CD4-positive, alpha-beta T cell (primary cell): ENCODE measurements at regions of chr20 and their contacts with region 1.

Region 1: GRCh38 chr20:40990542-40991120 is 38.0 kb upstream of the TOP1 start:
- DNase-seq: peak; percentile 31 to 81 (median 54)
- ATAC-seq: peak; percentile 80
- H3K4me3 ChIP-seq: no peak overlapping the region
- H3K4me3 Mint-ChIP-seq: no peak overlapping the region
- H3K27ac ChIP-seq: no peak overlapping the region
- H3K27ac Mint-ChIP-seq: peak overlapping the region; percentile 32
- H3K4me1 ChIP-seq: peaks cover 28% of the 10 kb centered on the region
- H3K4me1 Mint-ChIP-seq: peaks cover 31% of the 10 kb centered on the region
- H3K27me3 ChIP-seq: no peaks in the 10 kb centered on the region
- H3K27me3 Mint-ChIP-seq: no peaks in the 10 kb centered on the region
- CTCF ChIP-seq: peak; percentile 83

Region 2: DNA sequence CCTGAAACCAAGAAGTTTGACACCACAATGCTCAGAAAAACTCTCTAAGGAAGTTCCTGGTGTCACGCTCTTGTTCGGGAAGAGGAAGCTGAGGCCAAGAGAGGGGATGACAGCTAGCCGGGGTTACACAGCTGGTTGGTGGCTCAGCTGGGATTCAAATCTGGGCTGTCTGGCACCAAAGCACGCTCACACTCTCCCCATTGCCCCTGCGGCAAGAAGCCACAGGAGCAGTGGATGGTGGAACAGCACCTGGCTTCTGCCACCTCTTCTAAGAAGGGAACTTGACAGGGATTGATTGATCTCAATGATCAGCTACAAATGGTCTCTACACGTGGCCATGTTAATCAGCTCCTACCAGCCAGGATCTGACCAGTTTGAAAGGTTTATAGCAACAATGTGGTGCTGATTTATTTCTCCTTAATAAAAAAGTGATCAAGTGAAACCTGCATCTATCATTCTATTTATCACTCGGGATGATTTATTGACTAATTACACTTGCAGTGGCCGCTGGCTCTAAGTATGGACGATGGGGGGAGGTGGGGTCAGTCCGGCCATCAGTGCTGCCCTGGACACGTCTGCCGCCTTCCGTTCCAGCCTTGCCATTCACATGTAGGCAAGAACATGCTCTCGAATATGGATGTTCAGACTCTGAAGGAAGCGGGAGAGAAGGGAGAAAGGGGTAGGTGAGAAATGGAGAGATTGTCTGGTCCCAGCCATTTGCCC is 33.9 kb before region 1 on chr20:
- CTCF ChIA-PET with region 1: no interaction called
- POLR2A ChIA-PET with region 1: no interaction called
- intact Hi-C with region 1: no loop called
- DNase-seq: peak in 2 of 14 experiments; percentile 35 to 45
- ATAC-seq: no peak
- H3K4me3 ChIP-seq: no peak overlapping the region
- H3K4me3 Mint-ChIP-seq: no peak overlapping the region
- H3K27ac ChIP-seq: no peak overlapping the region
- H3K27ac Mint-ChIP-seq: no peak overlapping the region
- H3K4me1 ChIP-seq: peaks cover 7% of the 10 kb centered on the region
- H3K4me1 Mint-ChIP-seq: peaks cover 3% of the 10 kb centered on the region
- H3K27me3 ChIP-seq: no peaks in the 10 kb centered on the region
- H3K27me3 Mint-ChIP-seq: peaks cover 4% of the 10 kb centered on the region
- CTCF ChIP-seq: no peak

Region 3: DNA sequence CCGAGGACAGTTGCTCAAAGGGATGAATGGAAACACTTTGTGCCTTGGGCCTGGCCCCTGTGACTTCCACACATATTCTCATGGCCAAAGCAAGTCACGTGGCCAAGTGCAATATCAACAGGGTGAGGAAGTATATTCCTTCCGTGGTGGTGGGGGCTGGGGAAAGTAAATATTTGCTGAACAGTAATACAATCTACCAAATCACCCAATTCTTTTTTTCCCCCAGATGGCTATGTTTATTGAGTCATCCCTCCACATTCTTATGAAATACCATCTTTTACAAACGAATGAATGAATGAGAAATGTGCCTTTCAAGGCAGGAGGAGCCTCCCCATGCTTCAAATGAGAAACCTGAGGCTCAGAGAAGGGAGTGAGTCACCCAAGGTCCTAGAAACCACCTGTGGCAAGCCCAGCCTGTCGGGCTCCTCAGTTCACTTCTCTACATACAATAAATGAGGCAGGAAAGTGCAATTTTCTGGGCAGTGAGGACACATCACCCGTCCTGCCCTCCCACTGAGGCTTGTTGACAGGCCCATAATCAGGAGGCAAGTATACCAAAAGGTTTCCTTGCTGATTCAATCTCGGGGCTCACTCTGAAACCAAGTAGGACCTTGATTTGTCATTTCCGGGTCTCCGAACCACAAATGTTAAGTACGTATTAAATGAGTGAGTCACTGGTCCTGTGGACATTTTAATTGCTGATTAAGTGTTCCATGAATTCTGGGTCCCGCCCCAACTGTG is 12.7 kb after region 1 on chr20:
- CTCF ChIA-PET with region 1: interaction called, 10 read pairs
- POLR2A ChIA-PET with region 1: no interaction called
- intact Hi-C with region 1: no loop called
- DNase-seq: peak; percentile 19 to 89 (median 45)
- ATAC-seq: peak; percentile 88
- H3K4me3 ChIP-seq: peak overlapping the region; percentile 45
- H3K4me3 Mint-ChIP-seq: peak overlapping the region; percentile 79
- H3K27ac ChIP-seq: peak overlapping the region; percentile 25 to 88
- H3K27ac Mint-ChIP-seq: peak overlapping the region; percentile 95
- H3K4me1 ChIP-seq: peaks cover 33% of the 10 kb centered on the region
- H3K4me1 Mint-ChIP-seq: peaks cover 19% of the 10 kb centered on the region
- H3K27me3 ChIP-seq: no peaks in the 10 kb centered on the region
- H3K27me3 Mint-ChIP-seq: no peaks in the 10 kb centered on the region
- CTCF ChIP-seq: no peak

Region 4: DNA sequence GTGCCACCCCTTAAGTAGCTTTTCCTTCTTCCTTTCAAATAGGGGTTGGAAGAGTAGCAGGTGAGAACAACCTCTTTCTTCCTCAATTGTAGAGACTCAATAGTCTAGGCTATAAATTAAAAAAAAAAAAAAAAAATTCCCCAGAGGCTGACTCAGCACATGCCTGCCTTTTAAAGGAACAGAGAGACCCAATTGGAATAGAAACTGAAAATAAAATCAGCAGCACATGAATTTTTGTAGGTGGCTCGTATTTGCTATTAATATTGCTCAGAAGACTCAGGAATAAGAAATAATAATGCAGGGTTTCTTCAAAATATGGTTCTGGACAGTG is 57.3 kb after region 1 on chr20:
- CTCF ChIA-PET with region 1: interaction called, 5 read pairs
- POLR2A ChIA-PET with region 1: interaction called, 6 read pairs
- intact Hi-C with region 1: loop called in 1 of 2 experiments (anchors 2 kb)
- DNase-seq: peak in 3 of 14 experiments; percentile 61 to 70 (median 63)
- ATAC-seq: peak; percentile 71
- H3K4me3 ChIP-seq: peak overlapping the region; percentile 37
- H3K4me3 Mint-ChIP-seq: peak overlapping the region; percentile 80
- H3K27ac ChIP-seq: peak overlapping the region; percentile 54 to 56
- H3K27ac Mint-ChIP-seq: peak overlapping the region; percentile 69
- H3K4me1 ChIP-seq: peaks cover 54% of the 10 kb centered on the region
- H3K4me1 Mint-ChIP-seq: peaks cover 94% of the 10 kb centered on the region
- H3K27me3 ChIP-seq: no peaks in the 10 kb centered on the region
- H3K27me3 Mint-ChIP-seq: no peaks in the 10 kb centered on the region
- CTCF ChIP-seq: no peak

Region 5: DNA sequence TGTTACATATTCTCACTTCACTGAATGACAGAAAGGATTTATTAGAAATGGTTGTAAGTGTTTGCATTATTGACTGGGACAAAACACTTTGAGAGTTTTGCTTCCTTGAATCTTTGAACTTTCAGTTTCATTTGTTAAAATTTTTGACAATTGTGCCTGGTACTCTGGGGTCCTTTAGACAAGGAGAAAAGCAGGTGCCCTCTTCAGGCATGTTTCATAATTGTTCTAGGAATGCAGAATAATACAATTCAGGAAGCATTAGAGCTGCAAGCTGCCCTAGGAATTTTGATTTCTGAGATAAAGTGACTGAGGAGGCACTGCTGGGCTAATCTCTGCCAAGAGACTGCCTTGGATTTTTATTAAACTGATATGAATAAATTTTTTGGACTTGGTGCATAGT is 87.7 kb after region 1 on chr20:
- CTCF ChIA-PET with region 1: interaction called, 7 read pairs
- POLR2A ChIA-PET with region 1: interaction called, 5 read pairs
- intact Hi-C with region 1: loop called in 1 of 2 experiments (anchors 5 kb)
- DNase-seq: peak in 3 of 14 experiments; percentile 21 to 57 (median 30)
- ATAC-seq: peak; percentile 22
- H3K4me3 ChIP-seq: no peak overlapping the region
- H3K4me3 Mint-ChIP-seq: no peak overlapping the region
- H3K27ac ChIP-seq: no peak overlapping the region
- H3K27ac Mint-ChIP-seq: peak overlapping the region; percentile 42
- H3K4me1 ChIP-seq: peaks cover 7% of the 10 kb centered on the region
- H3K4me1 Mint-ChIP-seq: peaks cover 71% of the 10 kb centered on the region
- H3K27me3 ChIP-seq: no peaks in the 10 kb centered on the region
- H3K27me3 Mint-ChIP-seq: no peaks in the 10 kb centered on the region
- CTCF ChIP-seq: peak; percentile 18

Region 6: GRCh38 chr20:41095110-41095969 is 104.7 kb after region 1 on chr20:
- CTCF ChIA-PET with region 1: interaction called, 19 read pairs
- POLR2A ChIA-PET with region 1: interaction called, 20 read pairs
- intact Hi-C with region 1: loop called (anchors 1 kb)
- DNase-seq: peak; percentile 22 to 82 (median 46)
- ATAC-seq: peak; percentile 75
- H3K4me3 ChIP-seq: no peak overlapping the region
- H3K4me3 Mint-ChIP-seq: no peak overlapping the region
- H3K27ac ChIP-seq: no peak overlapping the region
- H3K27ac Mint-ChIP-seq: peak overlapping the region; percentile 4
- H3K4me1 ChIP-seq: no peaks in the 10 kb centered on the region
- H3K4me1 Mint-ChIP-seq: peaks cover 6% of the 10 kb centered on the region
- H3K27me3 ChIP-seq: no peaks in the 10 kb centered on the region
- H3K27me3 Mint-ChIP-seq: no peaks in the 10 kb centered on the region
- CTCF ChIP-seq: peak; percentile 98

Region 7: GRCh38 chr20:41232973-41233926 is 242.6 kb after region 1 on chr20:
- CTCF ChIA-PET with region 1: no interaction called
- POLR2A ChIA-PET with region 1: no interaction called
- intact Hi-C with region 1: loop called in 1 of 2 experiments (anchors 5 kb)
- DNase-seq: no peak
- ATAC-seq: no peak
- H3K4me3 ChIP-seq: no peak overlapping the region
- H3K4me3 Mint-ChIP-seq: no peak overlapping the region
- H3K27ac ChIP-seq: no peak overlapping the region
- H3K27ac Mint-ChIP-seq: no peak overlapping the region
- H3K4me1 ChIP-seq: peaks cover 11% of the 10 kb centered on the region
- H3K4me1 Mint-ChIP-seq: peaks cover 26% of the 10 kb centered on the region
- H3K27me3 ChIP-seq: no peaks in the 10 kb centered on the region
- H3K27me3 Mint-ChIP-seq: no peaks in the 10 kb centered on the region
- CTCF ChIP-seq: no peak